ENCODE measurements at regions of chr6 and their contacts with region 1.

Region 1: GRCh38 chr6:16761471-16762267 is 409 bp upstream of the ATXN1 start:
- DNase-seq: peak; percentile 82
- CTCF ChIP-seq: peak; percentile 43

Region 2: DNA sequence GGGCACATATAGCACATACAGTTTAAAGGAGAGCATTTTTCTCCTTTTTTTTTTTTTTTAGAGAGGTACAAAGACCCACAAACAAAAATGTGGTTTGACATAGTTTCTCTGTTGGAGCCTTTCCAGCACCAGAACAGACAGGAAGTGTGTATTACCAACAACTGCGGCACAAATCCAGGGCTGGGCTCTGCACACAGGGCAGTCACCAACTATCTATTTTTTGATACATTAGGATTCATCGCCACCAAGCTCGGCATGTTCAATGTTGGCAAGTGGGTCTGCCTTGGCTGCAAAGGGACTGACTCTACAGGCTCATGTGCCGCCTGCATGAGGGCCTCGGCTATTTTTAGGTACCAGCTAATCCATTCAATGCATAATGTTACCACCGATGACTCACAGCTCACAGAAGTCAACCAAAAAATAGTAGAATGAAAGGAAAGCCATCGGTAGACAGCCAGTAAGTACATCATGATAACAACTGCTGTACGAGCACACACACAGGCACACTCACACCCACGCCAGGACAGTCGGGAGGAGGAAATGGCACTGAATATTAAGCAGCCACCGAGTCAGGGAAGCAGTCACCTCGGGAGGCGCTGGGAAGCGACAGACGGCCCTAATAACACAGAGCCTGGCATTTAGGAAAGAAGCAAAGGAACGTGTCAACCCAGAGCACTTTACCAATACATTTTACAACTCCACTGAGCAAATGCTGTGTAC is 441.7 kb before region 1 on chr6:
- CTCF ChIA-PET with region 1: interaction called, 12 read pairs
- POLR2A ChIA-PET with region 1: interaction called, 4 read pairs
- DNase-seq: peak; percentile 59
- CTCF ChIP-seq: no peak

Region 3: GRCh38 chr6:16739329-16739801 is 22.3 kb before region 1 on chr6:
- CTCF ChIA-PET with region 1: interaction called, 16 read pairs
- POLR2A ChIA-PET with region 1: no interaction called
- DNase-seq: no peak
- CTCF ChIP-seq: no peak

Region 4: DNA sequence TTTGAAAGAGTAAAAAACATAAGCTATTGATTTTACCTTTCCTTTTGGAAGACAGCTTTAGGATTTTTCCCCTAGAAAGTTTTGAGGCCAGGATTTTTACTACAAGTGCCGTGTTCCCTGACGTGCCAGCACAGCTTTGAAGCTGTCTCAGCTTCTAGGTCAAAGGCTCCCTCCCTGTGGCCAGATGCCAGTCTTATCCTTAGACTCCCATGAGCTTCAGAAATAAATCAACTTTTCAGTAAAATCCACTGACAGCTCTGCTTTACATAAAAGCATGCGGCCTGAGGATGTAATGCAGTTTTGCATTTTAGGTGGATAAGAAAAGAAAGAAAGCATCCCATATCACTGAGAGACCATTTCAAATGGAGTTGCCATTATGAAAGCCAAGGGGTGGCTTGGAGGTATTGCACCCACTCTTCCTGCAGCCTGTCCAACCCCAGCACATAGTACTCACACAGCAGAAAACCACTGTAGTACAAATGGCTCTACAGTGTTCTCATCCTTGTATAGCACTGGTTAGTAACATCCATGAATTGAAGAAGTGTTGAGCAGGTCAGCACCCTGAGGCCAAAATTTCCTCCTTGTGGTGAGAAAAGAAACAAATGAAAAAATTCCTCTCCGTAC is 14.8 kb after region 1 on chr6:
- CTCF ChIA-PET with region 1: interaction called, 42 read pairs
- POLR2A ChIA-PET with region 1: interaction called, 4 read pairs
- DNase-seq: no peak
- CTCF ChIP-seq: no peak

Region 5: DNA sequence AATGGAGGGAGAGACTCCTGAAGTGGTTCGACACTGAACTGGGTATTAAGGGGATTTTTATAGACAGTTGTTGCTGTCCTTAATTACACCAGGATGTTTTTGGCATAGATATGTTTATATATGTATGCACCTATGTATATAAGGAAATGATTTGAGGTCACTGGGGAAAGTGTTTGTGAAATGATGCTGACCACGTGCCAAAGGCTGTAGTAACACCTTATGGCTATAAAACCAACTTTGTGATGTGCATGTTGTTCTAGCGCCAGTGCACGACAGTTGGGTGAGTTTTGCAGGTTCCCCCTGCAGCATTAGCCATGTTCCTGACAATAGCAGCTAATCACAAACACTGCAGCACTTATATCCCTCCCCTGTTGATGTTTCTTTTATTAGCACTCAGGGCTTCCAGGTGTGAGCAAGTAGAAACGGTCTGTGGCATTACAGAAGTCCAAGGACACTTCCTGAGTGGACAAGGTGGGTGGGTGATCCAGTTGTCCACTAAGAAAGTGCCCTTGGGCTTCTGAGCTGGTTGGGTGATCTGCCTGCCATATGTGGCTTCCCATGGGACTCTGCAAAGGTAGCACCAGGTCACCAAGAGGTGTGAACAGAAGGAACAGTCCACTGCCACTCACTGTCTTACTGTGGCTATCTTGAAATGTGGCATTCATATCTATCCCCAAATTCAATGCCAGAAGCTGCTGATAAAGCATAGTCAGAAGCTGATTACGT is 456.5 kb after region 1 on chr6:
- CTCF ChIA-PET with region 1: no interaction called
- POLR2A ChIA-PET with region 1: no interaction called
- DNase-seq: no peak
- CTCF ChIP-seq: no peak